AG04449 (cell line): ENCODE measurements at regions of chr13 and their contacts with region 1.

Region 1: DNA sequence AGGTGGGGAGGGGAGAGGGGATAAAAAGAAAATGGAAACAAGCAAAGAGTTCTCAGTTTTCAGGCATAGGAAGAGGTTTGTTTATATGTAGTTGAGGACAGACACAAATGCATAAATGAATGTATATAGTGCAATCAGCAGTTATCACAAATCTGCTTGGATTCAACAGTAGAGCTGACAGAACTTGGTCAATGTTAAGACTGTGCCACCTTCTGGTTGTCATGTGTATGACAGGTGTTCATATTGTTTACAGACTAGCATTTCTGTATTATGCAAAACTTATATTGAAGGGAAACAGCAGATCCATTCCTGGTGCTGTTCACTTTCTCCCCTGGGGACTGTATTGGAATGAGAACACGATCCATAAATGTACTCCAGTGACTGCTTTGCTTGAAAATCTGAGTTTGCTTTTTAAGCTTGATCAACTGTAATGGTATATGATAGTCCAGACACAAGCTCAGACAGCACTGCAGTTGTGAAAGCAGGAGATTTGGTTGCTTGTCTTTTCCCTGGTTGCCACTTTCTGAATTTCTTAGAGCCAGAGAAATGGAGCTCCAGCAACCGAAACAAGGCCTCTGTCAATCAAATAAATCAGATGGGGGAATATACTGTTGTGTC is 319.5 kb upstream of the OBI1 start:
- DNase-seq: peak; percentile 7
- H3K4me3 ChIP-seq: no peak overlapping the region
- CTCF ChIP-seq: peak; percentile 50

Region 2: GRCh38 chr13:78131811-78132210 is 846.7 kb before region 1 on chr13:
- CTCF ChIA-PET with region 1: interaction called, 106 read pairs
- POLR2A ChIA-PET with region 1: no interaction called
- DNase-seq: no peak
- H3K4me3 ChIP-seq: no peak overlapping the region
- CTCF ChIP-seq: no peak

Region 3: GRCh38 chr13:78137404-78138142 is 840.9 kb before region 1 on chr13:
- CTCF ChIA-PET with region 1: interaction called, 106 read pairs
- POLR2A ChIA-PET with region 1: no interaction called
- DNase-seq: peak; percentile 14
- H3K4me3 ChIP-seq: no peak overlapping the region
- CTCF ChIP-seq: peak; percentile 58

Region 4: DNA sequence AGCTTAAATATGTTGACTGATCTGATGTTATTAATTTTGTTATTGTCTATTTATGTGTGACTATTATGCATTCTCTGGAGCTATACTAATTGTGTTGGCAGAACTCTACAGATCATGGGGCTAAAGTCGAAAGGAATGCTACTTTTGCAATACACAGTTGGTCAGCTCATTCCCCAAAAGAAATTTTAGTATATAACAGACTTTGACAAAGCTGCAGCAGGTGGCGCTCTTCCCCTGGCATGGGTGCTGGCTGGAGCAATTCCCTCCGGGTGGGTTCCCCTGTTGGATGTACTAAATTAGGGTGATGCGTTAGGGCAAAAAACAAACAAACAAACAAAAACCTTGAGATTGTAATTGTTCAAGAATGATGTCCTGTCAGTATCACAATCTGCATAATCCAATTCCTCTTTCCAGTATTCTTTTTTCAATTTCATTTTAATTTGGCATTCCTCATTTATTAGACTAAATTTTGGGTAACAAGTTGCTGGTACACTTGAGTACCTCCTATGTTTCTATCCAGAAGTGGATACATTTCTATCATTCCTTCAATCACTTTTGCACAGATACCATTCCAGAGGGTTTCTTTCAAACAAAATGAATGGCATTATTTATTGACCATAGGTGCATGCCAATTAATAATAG is 737.1 kb before region 1 on chr13:
- CTCF ChIA-PET with region 1: interaction called, 14 read pairs
- POLR2A ChIA-PET with region 1: no interaction called
- DNase-seq: no peak
- H3K4me3 ChIP-seq: no peak overlapping the region
- CTCF ChIP-seq: peak; percentile 46

Region 5: GRCh38 chr13:79190932-79191331 is 212.4 kb after region 1 on chr13:
- CTCF ChIA-PET with region 1: no interaction called
- POLR2A ChIA-PET with region 1: no interaction called
- DNase-seq: no peak
- H3K4me3 ChIP-seq: no peak overlapping the region
- CTCF ChIP-seq: no peak